ENCODE measurements at regions of chr16 and their contacts with region 1.

Region 1: GRCh38 chr16:87636072-87636684 is 33.9 kb downstream of the JPH3 start:
- DNase-seq: peak; percentile 93
- H3K4me3 Mint-ChIP-seq: peak overlapping the region; percentile 67
- H3K27ac Mint-ChIP-seq: no peak overlapping the region
- H3K4me1 Mint-ChIP-seq: no peaks in the 10 kb centered on the region
- H3K27me3 Mint-ChIP-seq: peaks cover 32% of the 10 kb centered on the region
- CTCF ChIP-seq: peak; percentile 86

Region 2: GRCh38 chr16:87324411-87325275 is 311.5 kb before region 1 on chr16:
- CTCF ChIA-PET with region 1: interaction called, 8 read pairs
- POLR2A ChIA-PET with region 1: interaction called, 6 read pairs
- intact Hi-C with region 1: loop called (anchors 2 kb)
- DNase-seq: peak; percentile 22
- H3K4me3 Mint-ChIP-seq: no peak overlapping the region
- H3K27ac Mint-ChIP-seq: no peak overlapping the region
- H3K4me1 Mint-ChIP-seq: peaks cover 8% of the 10 kb centered on the region
- H3K27me3 Mint-ChIP-seq: no peaks in the 10 kb centered on the region
- CTCF ChIP-seq: peak; percentile 83

Region 3: GRCh38 chr16:87426423-87427215 is 209.6 kb before region 1 on chr16:
- CTCF ChIA-PET with region 1: interaction called, 24 read pairs
- POLR2A ChIA-PET with region 1: no interaction called
- intact Hi-C with region 1: no loop called
- DNase-seq: no peak
- H3K4me3 Mint-ChIP-seq: no peak overlapping the region
- H3K27ac Mint-ChIP-seq: no peak overlapping the region
- H3K4me1 Mint-ChIP-seq: no peaks in the 10 kb centered on the region
- H3K27me3 Mint-ChIP-seq: no peaks in the 10 kb centered on the region
- CTCF ChIP-seq: no peak

Region 4: GRCh38 chr16:87492721-87493607 is 143.2 kb before region 1 on chr16 and contains the start of gene ZCCHC14:
- CTCF ChIA-PET with region 1: interaction called, 12 read pairs
- POLR2A ChIA-PET with region 1: interaction called, 17 read pairs
- intact Hi-C with region 1: loop called (anchors 10 kb)
- DNase-seq: peak; percentile 98
- H3K4me3 Mint-ChIP-seq: peak within 1 kb of the TSS; percentile 88
- H3K27ac Mint-ChIP-seq: peak within 1 kb of the TSS; percentile 76
- H3K4me1 Mint-ChIP-seq: peaks cover 26% of the 10 kb centered on the region
- H3K27me3 Mint-ChIP-seq: no peaks in the 10 kb centered on the region
- CTCF ChIP-seq: no peak
- total RNA-seq, gene ZCCHC14: 23.3 and 28.2 TPM in 2 replicates

Region 5: GRCh38 chr16:87550496-87550961 is 85.6 kb before region 1 on chr16:
- CTCF ChIA-PET with region 1: interaction called, 40 read pairs
- POLR2A ChIA-PET with region 1: interaction called, 3 read pairs
- intact Hi-C with region 1: loop called (anchors 1 kb)
- DNase-seq: peak; percentile 42
- H3K4me3 Mint-ChIP-seq: no peak overlapping the region
- H3K27ac Mint-ChIP-seq: no peak overlapping the region
- H3K4me1 Mint-ChIP-seq: peaks cover 7% of the 10 kb centered on the region
- H3K27me3 Mint-ChIP-seq: peaks cover 21% of the 10 kb centered on the region
- CTCF ChIP-seq: peak; percentile 98

Region 6: GRCh38 chr16:87621976-87622713 is 14.0 kb before region 1 on chr16:
- CTCF ChIA-PET with region 1: interaction called, 48 read pairs
- POLR2A ChIA-PET with region 1: no interaction called
- intact Hi-C with region 1: no loop called
- DNase-seq: no peak
- H3K4me3 Mint-ChIP-seq: no peak overlapping the region
- H3K27ac Mint-ChIP-seq: no peak overlapping the region
- H3K4me1 Mint-ChIP-seq: no peaks in the 10 kb centered on the region
- H3K27me3 Mint-ChIP-seq: peaks cover 13% of the 10 kb centered on the region
- CTCF ChIP-seq: no peak

Region 7: GRCh38 chr16:87924422-87925298 is 288.5 kb after region 1 on chr16:
- CTCF ChIA-PET with region 1: no interaction called
- POLR2A ChIA-PET with region 1: no interaction called
- intact Hi-C with region 1: no loop called
- DNase-seq: no peak
- H3K4me3 Mint-ChIP-seq: no peak overlapping the region
- H3K27ac Mint-ChIP-seq: no peak overlapping the region
- H3K4me1 Mint-ChIP-seq: no peaks in the 10 kb centered on the region
- H3K27me3 Mint-ChIP-seq: peaks cover 31% of the 10 kb centered on the region
- CTCF ChIP-seq: no peak

Measured in MCF 10A (cell line).